ENCODE measurements at regions of chr6 and their contacts with region 1.

Region 1: DNA sequence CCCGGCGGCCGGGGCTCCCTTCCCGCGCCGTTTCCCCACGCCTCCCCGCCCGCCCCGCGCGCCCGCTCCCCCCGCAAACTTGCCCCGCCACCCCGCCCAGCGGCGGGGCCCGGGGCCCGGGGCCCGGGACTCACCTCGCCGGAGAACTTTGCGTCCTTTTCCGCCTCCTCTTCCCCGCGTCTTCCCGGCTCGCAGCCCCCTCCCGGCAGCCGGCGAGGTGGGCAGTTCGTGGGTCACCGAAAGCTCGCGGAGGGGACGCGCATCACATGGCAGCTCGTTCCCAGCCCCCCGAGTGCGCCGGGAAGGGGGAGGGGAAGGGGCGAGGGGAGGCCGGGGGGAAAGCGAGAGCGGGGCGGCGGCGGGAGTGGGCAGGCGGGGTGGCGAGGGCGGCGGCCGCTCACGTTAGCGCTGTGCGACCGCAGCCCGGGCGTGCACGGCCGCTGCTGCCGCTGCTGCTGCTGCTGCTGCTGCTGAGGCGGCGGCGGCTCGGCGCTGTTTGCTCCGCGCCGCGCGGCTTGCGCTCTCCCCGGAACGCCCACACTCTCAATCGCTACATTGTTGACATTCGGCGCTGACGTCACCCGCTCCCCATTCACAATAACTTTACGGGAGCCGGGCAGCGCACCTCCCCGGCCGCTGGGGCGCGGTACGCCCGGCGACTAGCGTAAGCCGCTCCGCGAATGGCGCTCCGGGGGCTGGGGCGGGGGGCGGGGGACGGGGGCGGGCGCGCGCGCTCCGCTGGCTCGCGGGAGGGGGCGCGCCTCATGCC is at the start of gene BACH2:
- DNase-seq: peak; percentile 90
- ATAC-seq: peak; percentile 67
- H3K4me3 Mint-ChIP-seq: peak within 1 kb of the TSS; percentile 93
- H3K27ac Mint-ChIP-seq: peak within 1 kb of the TSS; percentile 91
- H3K4me1 Mint-ChIP-seq: peaks cover 24% of the 10 kb centered on the region
- H3K27me3 Mint-ChIP-seq: peaks cover 5% of the 10 kb centered on the region
- total RNA-seq, gene BACH2: 61.7 to 65.8 TPM

Region 2: DNA sequence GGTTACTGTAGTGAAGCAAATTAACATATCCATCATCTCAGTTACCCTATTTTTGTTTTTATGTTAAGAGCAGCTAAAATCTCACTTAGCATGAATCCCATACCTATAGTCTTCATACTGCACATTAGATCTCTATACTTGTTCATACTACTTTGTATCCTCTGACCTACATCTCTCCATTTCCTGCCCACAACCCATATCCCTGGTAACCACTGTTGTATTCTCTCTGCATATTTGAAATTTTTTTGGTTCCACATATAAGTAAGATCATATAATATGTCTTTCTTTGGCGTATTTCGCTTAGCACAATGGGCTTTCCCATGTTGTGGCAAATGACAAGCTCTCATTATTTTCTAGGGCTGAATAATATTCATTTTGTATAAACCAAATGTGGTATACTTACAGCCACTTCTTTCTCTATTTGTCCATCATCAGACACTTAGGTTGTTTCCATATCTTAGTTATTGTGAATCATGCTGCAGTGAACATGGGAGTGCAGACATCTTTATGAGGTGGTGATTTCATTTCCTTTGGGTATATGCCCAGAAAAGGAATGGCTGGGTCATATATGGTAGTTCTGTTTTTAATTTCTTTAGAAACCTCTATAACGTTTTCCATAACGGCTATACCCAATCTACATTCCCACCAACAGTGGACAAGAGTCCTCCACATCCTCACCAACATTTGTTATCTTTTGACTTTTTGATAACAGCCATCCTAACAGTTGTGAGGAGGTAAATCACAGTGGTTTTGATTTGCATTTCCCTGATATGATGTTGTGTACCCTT is 39.6 kb before region 1 on chr6:
- POLR2A ChIA-PET with region 1: no interaction called
- DNase-seq: no peak
- ATAC-seq: peak; percentile 85
- H3K4me3 Mint-ChIP-seq: peak overlapping the region; percentile 36
- H3K27ac Mint-ChIP-seq: peak overlapping the region; percentile 85
- H3K4me1 Mint-ChIP-seq: peaks cover 76% of the 10 kb centered on the region
- H3K27me3 Mint-ChIP-seq: no peaks in the 10 kb centered on the region

Region 3: DNA sequence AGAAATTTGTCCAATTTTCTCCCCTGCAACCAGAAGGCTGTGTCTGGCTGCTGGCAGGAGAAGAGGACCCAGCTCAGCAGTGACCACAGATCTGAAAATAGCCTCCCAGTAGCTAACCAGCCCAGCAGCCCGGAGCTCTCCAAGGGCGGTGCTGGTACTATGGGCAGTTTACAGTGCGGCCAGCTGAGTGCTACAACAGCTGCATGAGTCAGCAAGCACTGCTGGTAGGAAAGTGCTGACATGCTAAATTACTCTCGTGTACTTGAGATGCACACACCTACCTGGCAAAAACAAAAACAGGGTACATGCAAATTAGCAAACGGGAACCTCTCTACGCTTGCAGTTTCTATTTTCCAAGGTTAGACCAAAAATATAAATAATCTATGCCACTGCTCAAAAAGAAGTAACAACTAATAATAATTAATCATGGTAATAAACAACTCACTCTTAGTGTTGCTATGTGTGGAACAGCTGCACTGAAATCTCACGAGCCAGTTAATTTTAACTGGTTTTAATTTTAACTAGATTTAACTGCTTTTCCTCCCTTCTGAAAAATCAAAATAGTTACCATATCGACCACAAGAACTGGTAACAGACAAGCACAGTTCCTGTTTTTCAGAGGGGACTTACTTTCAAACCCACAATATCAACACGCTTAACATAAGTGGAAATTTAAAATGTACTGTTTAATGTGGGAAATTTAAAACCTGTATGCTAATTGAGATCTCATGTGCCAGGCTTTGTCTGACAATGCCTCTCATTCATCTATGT is 10.7 kb before region 1 on chr6:
- POLR2A ChIA-PET with region 1: interaction called, 12 read pairs
- DNase-seq: peak; percentile 56
- ATAC-seq: peak; percentile 44
- H3K4me3 Mint-ChIP-seq: peak overlapping the region; percentile 86
- H3K27ac Mint-ChIP-seq: peak overlapping the region; percentile 95
- H3K4me1 Mint-ChIP-seq: peaks cover 83% of the 10 kb centered on the region
- H3K27me3 Mint-ChIP-seq: no peaks in the 10 kb centered on the region

Region 4: GRCh38 chr6:90393232-90393884 is 96.8 kb after region 1 on chr6:
- POLR2A ChIA-PET with region 1: interaction called, 15 read pairs
- DNase-seq: peak; percentile 69
- ATAC-seq: peak; percentile 87
- H3K4me3 Mint-ChIP-seq: peak overlapping the region; percentile 2
- H3K27ac Mint-ChIP-seq: peak overlapping the region; percentile 80
- H3K4me1 Mint-ChIP-seq: peaks cover 28% of the 10 kb centered on the region
- H3K27me3 Mint-ChIP-seq: no peaks in the 10 kb centered on the region